K562 (cell line): ENCODE measurements at regions of chr10 and their contacts with region 1.

Region 1: GRCh38 chr10:103918053-103918846 is at the start of gene STN1:
- DNase-seq: peak; percentile 92 to 95 (median 93)
- ATAC-seq: peak; percentile 97
- H3K4me3 ChIP-seq: peak within 1 kb of the TSS; percentile 75
- H3K27ac ChIP-seq: peak within 1 kb of the TSS; percentile 94
- H3K4me1 ChIP-seq: peaks cover 6 to 9% of the 10 kb centered on the region in 2 experiments
- H3K27me3 ChIP-seq: no peaks in the 10 kb centered on the region
- CTCF ChIP-seq: peak; percentile 22 to 34 (median 30); a peak in 2 of 6 replicates
- EP300 ChIP-seq: peak; percentile 46; the same call in 1 of the 2 replicates
- POLR2A ChIP-seq: peak; percentile 87
- RAD21 ChIP-seq: peak in 1 of 2 experiments; percentile 14; a peak in 1 of 4 replicates
- polyA plus RNA-seq, gene STN1: 12.0 to 16.0 TPM

Region 2: GRCh38 chr10:103966671-103967447 is 48.6 kb after region 1 on chr10 and contains the start of gene SLK:
- CTCF ChIA-PET with region 1: no interaction called
- POLR2A ChIA-PET with region 1: interaction called, 3 read pairs
- in situ Hi-C with region 1: no loop called
- intact Hi-C with region 1: loop called (anchors 1 kb)
- DNase-seq: peak; percentile 76 to 88 (median 83)
- ATAC-seq: peak; percentile 59
- H3K4me3 ChIP-seq: peak within 1 kb of the TSS; percentile 90
- H3K27ac ChIP-seq: peak within 1 kb of the TSS; percentile 98
- H3K4me1 ChIP-seq: peaks cover 1 to 5% of the 10 kb centered on the region in 2 experiments; a peak in 2 of 5 replicates
- H3K27me3 ChIP-seq: no peaks in the 10 kb centered on the region
- CTCF ChIP-seq: no peak
- EP300 ChIP-seq: no peak
- POLR2A ChIP-seq: peak; percentile 81
- RAD21 ChIP-seq: no peak
- polyA plus RNA-seq, gene SLK: 8.2 to 9.2 TPM

Region 3: GRCh38 chr10:104067525-104067924 is 149.3 kb after region 1 on chr10:
- CTCF ChIA-PET with region 1: no interaction called
- POLR2A ChIA-PET with region 1: no interaction called
- in situ Hi-C with region 1: no loop called
- intact Hi-C with region 1: no loop called
- DNase-seq: peak in 1 of 4 experiments; percentile 26
- ATAC-seq: 0 out of 3 replicates have a peak, but pooled peaks have one; percentile 32
- H3K4me3 ChIP-seq: no peak overlapping the region
- H3K27ac ChIP-seq: no peak overlapping the region
- H3K4me1 ChIP-seq: no peaks in the 10 kb centered on the region; a peak in 1 of 5 replicates
- H3K27me3 ChIP-seq: peaks cover 19 to 58% of the 10 kb centered on the region in 2 experiments
- CTCF ChIP-seq: no peak
- EP300 ChIP-seq: no peak
- POLR2A ChIP-seq: no peak
- RAD21 ChIP-seq: no peak